Naive thymus-derived CD4-positive, alpha-beta T cell (primary cell): ENCODE measurements at regions of chr19 and their contacts with region 1.

Region 1: GRCh38 chr19:48637170-48637947 is at the start of gene DBP:
- DNase-seq: peak; percentile 91 to 100 (median 100)
- ATAC-seq: peak; percentile 83
- H3K4me3 ChIP-seq: peak within 1 kb of the TSS; percentile 89
- H3K4me3 Mint-ChIP-seq: peak within 1 kb of the TSS; percentile 87 to 100 (median 98)
- H3K27ac ChIP-seq: peak within 1 kb of the TSS; percentile 90
- H3K27ac Mint-ChIP-seq: peak within 1 kb of the TSS; percentile 97 to 100 (median 98)
- H3K4me1 ChIP-seq: peaks cover 33 to 38% of the 10 kb centered on the region in 2 donors
- H3K4me1 Mint-ChIP-seq: peaks cover 13 to 46% (median 41%) of the 10 kb centered on the region in 7 donors
- H3K27me3 ChIP-seq: no peaks in the 10 kb centered on the region
- H3K27me3 Mint-ChIP-seq: peaks cover 0 to 8% (median 0%) of the 10 kb centered on the region in 5 donors
- total RNA-seq, gene DBP: 11.9 to 79.9 (median 33.2) TPM

Region 2: GRCh38 chr19:47608074-47608918 is 1029.1 kb before region 1 on chr19:
- CTCF ChIA-PET with region 1: no interaction called
- POLR2A ChIA-PET with region 1: no interaction called
- intact Hi-C with region 1: loop called in 1 of 2 experiments (anchors 5 kb)
- DNase-seq: peak; percentile 91 to 99 (median 96)
- ATAC-seq: peak; percentile 96
- H3K4me3 ChIP-seq: peak overlapping the region; percentile 79
- H3K4me3 Mint-ChIP-seq: peak overlapping the region; percentile 70 to 95 (median 86)
- H3K27ac ChIP-seq: peak overlapping the region; percentile 96
- H3K27ac Mint-ChIP-seq: peak overlapping the region; percentile 61 to 92 (median 88)
- H3K4me1 ChIP-seq: peaks cover 16 to 22% of the 10 kb centered on the region in 2 donors
- H3K4me1 Mint-ChIP-seq: peaks cover 12 to 36% (median 28%) of the 10 kb centered on the region in 7 donors
- H3K27me3 ChIP-seq: no peaks in the 10 kb centered on the region
- H3K27me3 Mint-ChIP-seq: peaks cover 0 to 2% (median 0%) of the 10 kb centered on the region in 5 donors

Region 3: GRCh38 chr19:48391107-48391986 is 246.0 kb before region 1 on chr19 and contains the start of gene KDELR1:
- CTCF ChIA-PET with region 1: no interaction called
- POLR2A ChIA-PET with region 1: no interaction called
- intact Hi-C with region 1: loop called in 1 of 2 experiments (anchors 2 kb)
- DNase-seq: peak; percentile 55 to 89 (median 72)
- ATAC-seq: peak; percentile 92
- H3K4me3 ChIP-seq: peak within 1 kb of the TSS; percentile 96
- H3K4me3 Mint-ChIP-seq: peak within 1 kb of the TSS; percentile 84 to 95 (median 92)
- H3K27ac ChIP-seq: peak within 1 kb of the TSS; percentile 92
- H3K27ac Mint-ChIP-seq: peak within 1 kb of the TSS; percentile 78 to 97 (median 93)
- H3K4me1 ChIP-seq: peaks cover 15 to 32% of the 10 kb centered on the region in 2 donors
- H3K4me1 Mint-ChIP-seq: peaks cover 5 to 46% (median 36%) of the 10 kb centered on the region in 7 donors
- H3K27me3 ChIP-seq: peaks cover 9 to 21% of the 10 kb centered on the region in 2 donors
- H3K27me3 Mint-ChIP-seq: peaks cover 9 to 42% (median 21%) of the 10 kb centered on the region in 5 donors
- total RNA-seq, gene KDELR1: 42.7 to 73.9 (median 52.3) TPM

Region 4: GRCh38 chr19:48618916-48619691 is 18.3 kb before region 1 on chr19 and contains the starts of genes RPL18 and SPHK2:
- CTCF ChIA-PET with region 1: interaction called, 4 read pairs
- POLR2A ChIA-PET with region 1: interaction called, 73 read pairs
- intact Hi-C with region 1: loop called (anchors 1 kb)
- DNase-seq: peak; percentile 89 to 97 (median 95)
- ATAC-seq: peak; percentile 89
- H3K4me3 ChIP-seq: peak within 1 kb of the TSS; percentile 96
- H3K4me3 Mint-ChIP-seq: peak within 1 kb of the TSS; percentile 88 to 99 (median 96)
- H3K27ac ChIP-seq: peak within 1 kb of the TSS; percentile 95
- H3K27ac Mint-ChIP-seq: peak within 1 kb of the TSS; percentile 96 to 99 (median 98)
- H3K4me1 ChIP-seq: peaks cover 26 to 45% of the 10 kb centered on the region in 2 donors
- H3K4me1 Mint-ChIP-seq: peaks cover 40 to 64% (median 54%) of the 10 kb centered on the region in 7 donors
- H3K27me3 ChIP-seq: no peaks in the 10 kb centered on the region
- H3K27me3 Mint-ChIP-seq: no peaks in the 10 kb centered on the region
- total RNA-seq, gene RPL18: 1,570 to 2,826 (median 2,745) TPM
- total RNA-seq, gene SPHK2: 20.1 to 34.7 (median 30.5) TPM

Region 5: GRCh38 chr19:48720613-48721296 is 83.4 kb after region 1 on chr19:
- CTCF ChIA-PET with region 1: no interaction called
- POLR2A ChIA-PET with region 1: interaction called, 4 read pairs
- intact Hi-C with region 1: loop called (anchors 1 kb)
- DNase-seq: peak; percentile 77 to 93 (median 89)
- ATAC-seq: peak; percentile 91
- H3K4me3 ChIP-seq: peak overlapping the region; percentile 92
- H3K4me3 Mint-ChIP-seq: peak overlapping the region; percentile 80 to 99 (median 97)
- H3K27ac ChIP-seq: peak overlapping the region; percentile 80
- H3K27ac Mint-ChIP-seq: peak overlapping the region; percentile 98 to 100 (median 99)
- H3K4me1 ChIP-seq: peaks cover 5 to 17% of the 10 kb centered on the region in 2 donors
- H3K4me1 Mint-ChIP-seq: peaks cover 19 to 30% (median 25%) of the 10 kb centered on the region in 7 donors
- H3K27me3 ChIP-seq: no peaks in the 10 kb centered on the region
- H3K27me3 Mint-ChIP-seq: no peaks in the 10 kb centered on the region

Region 6: DNA sequence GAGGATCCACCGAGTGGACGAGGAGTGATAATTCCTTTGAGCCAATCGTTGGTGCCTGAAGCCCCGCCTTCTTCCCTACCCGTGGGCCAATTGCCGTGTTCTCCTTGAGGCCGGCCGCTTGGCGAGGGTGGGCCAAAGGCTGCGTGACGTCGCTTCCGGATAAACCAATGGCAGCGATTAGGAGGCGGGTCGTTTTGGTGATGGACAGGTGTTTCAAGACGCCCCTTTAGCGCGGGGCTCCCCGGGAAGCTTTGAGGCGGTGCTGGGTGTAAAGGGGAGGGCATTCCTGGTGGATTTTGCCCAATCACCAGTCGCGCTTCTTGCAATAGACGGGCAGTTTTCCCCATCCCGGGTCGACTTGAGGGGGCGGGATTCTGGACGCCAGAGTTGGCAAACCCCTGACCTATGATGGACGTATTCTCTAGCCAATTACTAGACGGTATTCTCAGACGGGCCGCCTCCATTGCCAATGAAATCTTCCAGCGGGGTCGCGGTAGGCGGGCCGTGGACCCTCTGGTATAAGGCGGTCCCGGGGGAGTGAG is 1039.4 kb after region 1 on chr19:
- CTCF ChIA-PET with region 1: no interaction called
- POLR2A ChIA-PET with region 1: no interaction called
- intact Hi-C with region 1: loop called (anchors 5 to 10 kb)
- DNase-seq: peak; percentile 84 to 99 (median 97)
- ATAC-seq: peak; percentile 87
- H3K4me3 ChIP-seq: peak overlapping the region; percentile 86
- H3K4me3 Mint-ChIP-seq: peak overlapping the region; percentile 91 to 100 (median 98)
- H3K27ac ChIP-seq: peak overlapping the region; percentile 95
- H3K27ac Mint-ChIP-seq: peak overlapping the region; percentile 93 to 100 (median 99)
- H3K4me1 ChIP-seq: peaks cover 18 to 23% of the 10 kb centered on the region in 2 donors
- H3K4me1 Mint-ChIP-seq: peaks cover 18 to 50% (median 43%) of the 10 kb centered on the region in 7 donors
- H3K27me3 ChIP-seq: no peaks in the 10 kb centered on the region
- H3K27me3 Mint-ChIP-seq: no peaks in the 10 kb centered on the region